MCF 10A (cell line): ENCODE measurements at regions of chr2 and their contacts with region 1.

Region 1: GRCh38 chr2:235746257-235747084 is 252.6 kb downstream of the AGAP1 start:
- DNase-seq: peak; percentile 90
- H3K4me3 Mint-ChIP-seq: peak overlapping the region; percentile 72
- H3K27ac Mint-ChIP-seq: peak overlapping the region; percentile 93
- H3K4me1 Mint-ChIP-seq: peaks cover 42% of the 10 kb centered on the region
- H3K27me3 Mint-ChIP-seq: no peaks in the 10 kb centered on the region
- CTCF ChIP-seq: peak; percentile 74

Region 2: GRCh38 chr2:235135990-235136561 is 610.4 kb before region 1 on chr2:
- CTCF ChIA-PET with region 1: interaction called, 21 read pairs
- POLR2A ChIA-PET with region 1: interaction called, 3 read pairs
- intact Hi-C with region 1: loop called (anchors 1 kb)
- DNase-seq: peak; percentile 86
- H3K4me3 Mint-ChIP-seq: peak overlapping the region; percentile 18
- H3K27ac Mint-ChIP-seq: no peak overlapping the region
- H3K4me1 Mint-ChIP-seq: peaks cover 7% of the 10 kb centered on the region
- H3K27me3 Mint-ChIP-seq: peaks cover 36% of the 10 kb centered on the region
- CTCF ChIP-seq: peak; percentile 63

Region 3: DNA sequence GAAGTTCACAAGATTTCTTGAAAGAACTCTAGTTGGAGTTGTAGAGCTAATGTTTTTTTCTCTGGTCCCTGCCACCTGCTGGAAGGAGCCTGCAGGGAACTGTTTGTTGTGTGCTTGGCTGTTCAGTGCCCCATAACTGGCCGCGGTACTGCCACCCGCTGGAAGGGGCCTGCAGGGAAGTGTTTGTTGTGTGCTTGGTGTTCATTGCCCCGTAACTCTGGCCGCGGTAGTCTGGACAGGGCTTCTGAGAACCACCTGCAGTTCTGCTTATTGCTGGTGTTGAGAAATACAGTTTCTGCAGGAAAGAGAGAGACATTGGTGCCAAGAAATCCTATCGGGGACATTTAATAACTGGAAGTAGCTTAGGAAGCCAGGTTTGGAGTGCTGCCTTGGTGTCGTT is 194.5 kb before region 1 on chr2:
- CTCF ChIA-PET with region 1: interaction called, 9 read pairs
- POLR2A ChIA-PET with region 1: no interaction called
- intact Hi-C with region 1: loop called (anchors 2 kb)
- DNase-seq: peak; percentile 70
- H3K4me3 Mint-ChIP-seq: no peak overlapping the region
- H3K27ac Mint-ChIP-seq: no peak overlapping the region
- H3K4me1 Mint-ChIP-seq: peaks cover 6% of the 10 kb centered on the region
- H3K27me3 Mint-ChIP-seq: no peaks in the 10 kb centered on the region
- CTCF ChIP-seq: peak; percentile 57

Region 4: DNA sequence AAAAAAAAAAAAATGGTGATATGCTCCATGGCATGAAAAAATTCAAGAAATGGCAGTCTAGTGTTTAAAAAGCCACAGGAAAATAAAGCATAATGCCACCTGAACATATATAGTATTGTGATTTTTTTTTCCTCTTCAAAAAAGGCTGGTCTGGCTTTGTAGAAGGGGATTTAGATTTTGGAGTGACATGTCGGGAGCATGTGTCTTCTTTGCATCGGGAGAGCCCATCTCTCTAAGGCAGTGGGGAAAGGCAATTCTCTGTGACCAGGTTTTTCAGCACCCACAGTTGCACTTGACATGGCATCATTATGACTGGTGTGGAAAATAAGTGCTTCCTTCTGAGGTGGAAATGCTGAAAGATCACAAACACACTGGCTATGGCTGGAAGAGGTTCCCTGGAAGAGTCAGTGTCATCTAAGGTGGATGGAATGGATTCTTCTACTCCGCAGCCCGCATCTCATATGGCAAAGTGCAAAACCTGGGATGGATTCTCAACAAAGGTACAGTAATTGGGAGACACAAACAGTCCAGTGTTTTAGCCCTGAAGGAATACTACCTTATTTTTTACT is 80.2 kb before region 1 on chr2:
- CTCF ChIA-PET with region 1: interaction called, 11 read pairs
- POLR2A ChIA-PET with region 1: interaction called, 6 read pairs
- intact Hi-C with region 1: loop called (anchors 2 kb)
- DNase-seq: peak; percentile 88
- H3K4me3 Mint-ChIP-seq: peak overlapping the region; percentile 82
- H3K27ac Mint-ChIP-seq: peak overlapping the region; percentile 83
- H3K4me1 Mint-ChIP-seq: peaks cover 10% of the 10 kb centered on the region
- H3K27me3 Mint-ChIP-seq: no peaks in the 10 kb centered on the region
- CTCF ChIP-seq: no peak

Region 5: GRCh38 chr2:235709124-235709813 is 37.2 kb before region 1 on chr2:
- CTCF ChIA-PET with region 1: interaction called, 11 read pairs
- POLR2A ChIA-PET with region 1: interaction called, 6 read pairs
- intact Hi-C with region 1: no loop called
- DNase-seq: peak; percentile 87
- H3K4me3 Mint-ChIP-seq: peak overlapping the region; percentile 49
- H3K27ac Mint-ChIP-seq: peak overlapping the region; percentile 88
- H3K4me1 Mint-ChIP-seq: peaks cover 27% of the 10 kb centered on the region
- H3K27me3 Mint-ChIP-seq: no peaks in the 10 kb centered on the region
- CTCF ChIP-seq: no peak

Region 6: GRCh38 chr2:235757212-235757611 is 10.7 kb after region 1 on chr2:
- CTCF ChIA-PET with region 1: interaction called, 10 read pairs
- POLR2A ChIA-PET with region 1: interaction called, 5 read pairs
- intact Hi-C with region 1: no loop called
- DNase-seq: no peak
- H3K4me3 Mint-ChIP-seq: no peak overlapping the region
- H3K27ac Mint-ChIP-seq: no peak overlapping the region
- H3K4me1 Mint-ChIP-seq: no peaks in the 10 kb centered on the region
- H3K27me3 Mint-ChIP-seq: no peaks in the 10 kb centered on the region
- CTCF ChIP-seq: no peak